ENCODE measurements at regions of chr7 and their contacts with region 1.

Region 1: DNA sequence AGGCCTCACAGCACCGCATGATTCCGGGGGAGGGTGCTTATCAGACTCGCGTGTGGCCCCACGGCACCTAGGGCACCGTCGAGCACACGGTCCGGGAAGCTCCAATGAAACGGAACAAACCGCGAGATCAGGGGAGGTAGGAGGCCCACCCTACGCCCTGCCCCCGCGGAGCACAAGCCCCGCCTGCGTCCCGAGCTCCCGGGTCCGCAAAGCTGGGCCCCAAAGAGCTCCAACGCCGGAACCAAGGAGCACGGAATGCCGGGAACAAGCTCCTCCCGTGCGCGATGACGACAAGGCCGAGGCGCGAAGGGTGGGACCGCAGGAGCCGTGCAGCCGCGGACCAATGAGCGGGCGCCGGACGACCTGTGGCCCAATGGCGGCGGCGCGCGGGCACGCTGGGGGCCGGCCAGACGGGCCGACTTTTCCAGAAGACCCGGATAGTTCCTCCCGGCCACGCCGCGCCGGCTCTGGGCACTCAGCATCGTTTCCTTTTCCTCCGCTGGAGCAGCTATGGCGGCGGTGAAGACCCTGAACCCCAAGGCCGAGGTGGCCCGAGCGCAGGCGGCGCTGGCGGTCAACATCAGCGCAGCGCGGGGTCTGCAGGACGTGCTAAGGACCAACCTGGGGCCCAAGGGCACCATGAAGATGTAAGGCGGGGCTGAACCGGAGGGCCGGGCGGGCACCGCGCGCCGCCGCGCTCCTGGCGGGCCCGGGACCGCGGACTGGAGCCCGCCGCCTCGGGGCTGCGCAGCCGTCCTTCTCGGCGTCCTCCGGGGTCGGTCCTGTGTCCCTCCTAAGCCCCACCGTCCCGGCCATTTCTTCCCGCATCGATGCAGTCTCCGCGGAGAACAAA is at the starts of genes CCT6A and PSPH:
- DNase-seq: peak; percentile 64 to 95 (median 88)
- ATAC-seq: peak; percentile 86
- H3K4me3 ChIP-seq: peak within 1 kb of the TSS; percentile 72 to 81
- H3K4me3 Mint-ChIP-seq: peak within 1 kb of the TSS; percentile 92
- H3K27ac ChIP-seq: peak within 1 kb of the TSS; percentile 62 to 83
- H3K27ac Mint-ChIP-seq: peak within 1 kb of the TSS; percentile 95
- H3K4me1 ChIP-seq: peaks cover 29% of the 10 kb centered on the region
- H3K4me1 Mint-ChIP-seq: peaks cover 47% of the 10 kb centered on the region
- H3K27me3 ChIP-seq: no peaks in the 10 kb centered on the region
- H3K27me3 Mint-ChIP-seq: no peaks in the 10 kb centered on the region
- CTCF ChIP-seq: no peak
- total RNA-seq, gene CCT6A: 36.3 to 40.9 TPM
- total RNA-seq, gene PSPH: 0.89 to 1.1 TPM

Region 2: GRCh38 chr7:55629051-55629677 is 422.4 kb before region 1 on chr7:
- CTCF ChIA-PET with region 1: no interaction called
- POLR2A ChIA-PET with region 1: no interaction called
- intact Hi-C with region 1: no loop called
- DNase-seq: no peak
- ATAC-seq: no peak
- H3K4me3 ChIP-seq: no peak overlapping the region
- H3K4me3 Mint-ChIP-seq: no peak overlapping the region
- H3K27ac ChIP-seq: no peak overlapping the region
- H3K27ac Mint-ChIP-seq: no peak overlapping the region
- H3K4me1 ChIP-seq: no peaks in the 10 kb centered on the region
- H3K4me1 Mint-ChIP-seq: no peaks in the 10 kb centered on the region
- H3K27me3 ChIP-seq: no peaks in the 10 kb centered on the region
- H3K27me3 Mint-ChIP-seq: peaks cover 7% of the 10 kb centered on the region
- CTCF ChIP-seq: no peak

Region 3: GRCh38 chr7:55887821-55888247 is 163.7 kb before region 1 on chr7:
- CTCF ChIA-PET with region 1: no interaction called
- POLR2A ChIA-PET with region 1: interaction called, 3 read pairs
- intact Hi-C with region 1: loop called in 1 of 2 experiments (anchors 5 kb)
- DNase-seq: peak in 2 of 9 experiments; percentile 5 to 38
- ATAC-seq: peak; percentile 15
- H3K4me3 ChIP-seq: peak overlapping the region in 1 of 2 experiments; percentile 58
- H3K4me3 Mint-ChIP-seq: peak overlapping the region; percentile 86
- H3K27ac ChIP-seq: no peak overlapping the region
- H3K27ac Mint-ChIP-seq: peak overlapping the region; percentile 87
- H3K4me1 ChIP-seq: no peaks in the 10 kb centered on the region
- H3K4me1 Mint-ChIP-seq: peaks cover 8% of the 10 kb centered on the region
- H3K27me3 ChIP-seq: no peaks in the 10 kb centered on the region
- H3K27me3 Mint-ChIP-seq: no peaks in the 10 kb centered on the region
- CTCF ChIP-seq: no peak

Region 4: DNA sequence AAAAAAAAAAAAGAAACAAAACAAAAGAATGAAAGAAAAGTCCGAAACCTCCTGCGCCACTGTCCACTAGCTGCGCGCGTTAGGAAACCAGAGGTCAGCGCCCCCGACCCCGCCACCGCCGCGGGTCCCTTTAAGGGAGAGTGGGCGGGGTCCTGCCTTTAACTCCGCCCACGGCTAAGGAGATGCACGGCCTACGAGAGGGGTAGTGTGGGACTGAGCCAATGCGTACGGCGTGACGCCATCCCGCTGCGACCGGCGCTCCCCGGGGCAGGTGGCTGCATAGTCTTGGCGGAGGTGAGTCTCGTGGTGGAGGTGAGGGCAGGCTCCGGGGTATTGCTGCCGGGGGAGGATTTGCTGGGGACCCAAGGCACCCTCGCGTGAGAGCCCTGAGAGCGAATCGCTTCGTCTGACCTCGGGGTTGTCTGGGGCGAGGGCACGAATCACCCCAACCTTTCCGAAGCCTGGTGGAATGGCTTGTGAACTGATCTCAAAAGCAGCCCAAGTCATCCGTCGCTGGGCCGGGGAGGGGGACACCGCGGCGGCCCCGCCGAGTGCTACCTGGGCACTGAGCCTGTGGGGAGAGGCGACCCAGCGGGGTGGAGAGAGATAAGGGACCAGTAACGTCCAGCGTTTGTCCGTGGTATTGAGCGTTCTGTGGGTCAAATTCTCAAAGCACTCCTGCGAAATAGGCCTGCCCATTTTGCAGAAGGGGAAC is 99.8 kb before region 1 on chr7 and contains the start of gene MRPS17:
- CTCF ChIA-PET with region 1: no interaction called
- POLR2A ChIA-PET with region 1: no interaction called
- intact Hi-C with region 1: loop called in 1 of 2 experiments (anchors 5 kb)
- DNase-seq: peak; percentile 82 to 96 (median 93)
- ATAC-seq: peak; percentile 99
- H3K4me3 ChIP-seq: peak within 1 kb of the TSS; percentile 71 to 86
- H3K4me3 Mint-ChIP-seq: peak within 1 kb of the TSS; percentile 94
- H3K27ac ChIP-seq: peak within 1 kb of the TSS; percentile 78 to 91
- H3K27ac Mint-ChIP-seq: peak within 1 kb of the TSS; percentile 97
- H3K4me1 ChIP-seq: peaks cover 6% of the 10 kb centered on the region
- H3K4me1 Mint-ChIP-seq: peaks cover 26% of the 10 kb centered on the region
- H3K27me3 ChIP-seq: no peaks in the 10 kb centered on the region
- H3K27me3 Mint-ChIP-seq: no peaks in the 10 kb centered on the region
- CTCF ChIP-seq: no peak
- total RNA-seq, gene MRPS17: 7.8 to 8.9 TPM

Region 5: DNA sequence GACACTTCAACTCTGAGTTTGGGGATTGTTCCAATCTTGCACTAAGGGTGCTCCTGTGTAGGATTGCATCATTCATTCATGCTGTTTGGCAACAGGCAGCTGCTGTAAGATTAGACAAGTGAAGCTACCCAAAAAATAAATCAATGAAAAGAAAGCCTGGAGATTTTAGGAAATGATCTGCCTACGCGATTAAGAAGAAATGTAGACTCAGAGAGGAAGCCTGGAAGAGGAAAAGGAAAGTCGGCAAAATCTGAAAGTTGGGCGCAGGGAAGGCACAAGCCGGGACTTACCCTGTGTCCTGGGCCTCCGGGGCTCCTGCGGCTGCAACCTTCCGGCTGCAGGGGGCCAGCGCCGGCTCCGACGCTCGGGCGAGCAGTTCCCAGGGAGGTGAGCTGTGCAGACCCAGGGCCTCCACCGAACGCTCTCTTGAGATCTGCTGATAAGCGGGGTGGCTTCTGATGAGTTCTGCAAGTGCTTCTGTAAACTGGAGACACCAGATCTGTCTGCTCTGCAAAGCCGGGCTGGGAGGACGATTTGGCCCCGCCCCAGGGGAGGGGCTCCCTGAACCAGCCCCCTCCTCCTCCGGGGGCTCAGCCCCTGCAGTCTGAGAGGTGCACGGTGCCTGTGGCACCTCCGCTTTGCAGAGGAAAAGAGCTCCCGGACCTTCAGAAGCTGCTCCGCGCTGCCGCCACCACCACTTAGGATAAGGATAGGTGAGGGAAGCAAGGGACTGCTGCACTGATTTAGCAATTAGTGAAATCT is 17.7 kb before region 1 on chr7:
- CTCF ChIA-PET with region 1: interaction called, 6 read pairs
- POLR2A ChIA-PET with region 1: interaction called, 5 read pairs
- intact Hi-C with region 1: loop called (anchors 1 to 2 kb)
- DNase-seq: peak; percentile 46 to 85 (median 73)
- ATAC-seq: peak; percentile 99
- H3K4me3 ChIP-seq: peak overlapping the region; percentile 49 to 73
- H3K4me3 Mint-ChIP-seq: peak overlapping the region; percentile 86
- H3K27ac ChIP-seq: no peak overlapping the region
- H3K27ac Mint-ChIP-seq: peak overlapping the region; percentile 72
- H3K4me1 ChIP-seq: peaks cover 3% of the 10 kb centered on the region
- H3K4me1 Mint-ChIP-seq: peaks cover 9% of the 10 kb centered on the region
- H3K27me3 ChIP-seq: no peaks in the 10 kb centered on the region
- H3K27me3 Mint-ChIP-seq: no peaks in the 10 kb centered on the region
- CTCF ChIP-seq: no peak

Measured in CD8-positive, alpha-beta T cell (primary cell).